Pancreas (tissue), 10 donors: ENCODE measurements at regions of chr16 and their contacts with region 1.

Region 1: GRCh38 chr16:76653390-76654026 is 376.3 kb downstream of the CNTNAP4 start:
- DNase-seq: no peak
- ATAC-seq: peak in 3 of 4 donors; percentile 79 to 80 (median 80)
- H3K4me3 ChIP-seq: no peak overlapping the region
- H3K27ac ChIP-seq: no peak overlapping the region
- H3K4me1 ChIP-seq: no peaks in the 10 kb centered on the region
- H3K27me3 ChIP-seq: no peaks in the 10 kb centered on the region
- CTCF ChIP-seq: peak in 3 of 4 donors; percentile 24 to 38 (median 33)

Region 2: DNA sequence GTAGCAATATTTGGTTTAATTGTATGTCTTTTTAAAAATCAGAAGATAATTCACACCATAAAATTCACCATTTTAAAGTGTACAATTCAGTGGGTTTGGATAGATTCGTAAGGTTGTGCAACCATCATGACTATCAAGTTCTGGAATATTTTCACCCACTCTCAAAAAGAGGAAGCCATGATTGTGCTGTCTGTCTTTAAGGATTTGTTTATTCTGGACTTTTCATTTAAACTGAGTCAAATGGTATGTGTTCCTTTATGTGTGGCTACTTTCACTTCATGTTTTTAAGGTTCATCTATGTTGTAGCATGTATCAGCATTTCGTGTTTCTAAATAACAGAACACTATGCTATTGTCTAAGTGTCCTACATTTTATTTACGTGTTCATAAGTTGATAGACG is 859.1 kb before region 1 on chr16:
- intact Hi-C with region 1: loop called in 1 of 3 experiments (anchors 10 kb)
- DNase-seq: no peak
- ATAC-seq: peak in 1 of 4 donors; percentile 37
- H3K4me3 ChIP-seq: no peak overlapping the region
- H3K27ac ChIP-seq: no peak overlapping the region
- H3K4me1 ChIP-seq: no peaks in the 10 kb centered on the region
- H3K27me3 ChIP-seq: no peaks in the 10 kb centered on the region
- CTCF ChIP-seq: no peak

Region 3: GRCh38 chr16:76428858-76429257 is 224.7 kb before region 1 on chr16:
- intact Hi-C with region 1: no loop called
- DNase-seq: no peak
- ATAC-seq: peak in 3 of 4 donors; percentile 50 to 77 (median 54)
- H3K4me3 ChIP-seq: no peak overlapping the region
- H3K27ac ChIP-seq: no peak overlapping the region
- H3K4me1 ChIP-seq: peaks cover 0 to 3% (median 0%) of the 10 kb centered on the region in 3 donors
- H3K27me3 ChIP-seq: no peaks in the 10 kb centered on the region
- CTCF ChIP-seq: no peak

Region 4: DNA sequence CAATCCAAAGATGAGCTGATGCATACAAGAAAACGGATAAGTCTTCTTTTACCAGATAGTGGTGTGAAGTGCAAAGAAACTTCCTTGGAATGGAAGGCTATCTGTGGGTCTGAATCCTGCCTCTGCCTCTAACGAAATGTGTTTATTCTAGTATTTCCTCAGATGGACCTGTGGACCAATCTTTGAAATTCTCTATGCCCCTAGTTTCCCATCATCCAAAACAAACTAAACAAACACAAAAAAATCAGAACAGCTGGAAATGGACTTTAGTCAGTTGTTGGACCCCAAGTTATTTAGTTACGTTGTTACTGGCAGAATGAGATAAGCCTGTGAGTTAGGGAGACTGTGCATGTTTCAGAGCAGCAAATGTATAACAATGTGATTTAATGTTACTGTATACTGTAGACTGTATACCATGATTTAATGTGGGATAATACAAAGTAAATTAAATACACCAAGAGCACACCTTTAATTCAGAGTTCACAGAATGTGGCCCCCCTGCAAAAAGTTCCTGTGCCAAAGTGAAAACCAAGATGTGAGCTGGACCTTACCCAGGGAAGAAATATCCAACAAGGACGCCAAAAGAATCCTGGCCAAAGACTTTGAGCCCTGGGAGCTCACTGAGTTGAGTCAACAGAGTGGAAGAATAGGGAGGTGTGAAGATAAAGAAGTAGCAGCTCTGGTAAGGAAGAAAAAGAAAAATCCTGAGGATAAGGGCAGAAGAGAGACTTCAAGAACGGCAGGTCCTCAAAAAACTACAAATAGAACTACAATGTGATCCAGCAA is 121.1 kb before region 1 on chr16:
- intact Hi-C with region 1: no loop called
- DNase-seq: no peak
- ATAC-seq: no peak
- H3K4me3 ChIP-seq: no peak overlapping the region
- H3K27ac ChIP-seq: no peak overlapping the region
- H3K4me1 ChIP-seq: no peaks in the 10 kb centered on the region
- H3K27me3 ChIP-seq: no peaks in the 10 kb centered on the region
- CTCF ChIP-seq: no peak

Region 5: DNA sequence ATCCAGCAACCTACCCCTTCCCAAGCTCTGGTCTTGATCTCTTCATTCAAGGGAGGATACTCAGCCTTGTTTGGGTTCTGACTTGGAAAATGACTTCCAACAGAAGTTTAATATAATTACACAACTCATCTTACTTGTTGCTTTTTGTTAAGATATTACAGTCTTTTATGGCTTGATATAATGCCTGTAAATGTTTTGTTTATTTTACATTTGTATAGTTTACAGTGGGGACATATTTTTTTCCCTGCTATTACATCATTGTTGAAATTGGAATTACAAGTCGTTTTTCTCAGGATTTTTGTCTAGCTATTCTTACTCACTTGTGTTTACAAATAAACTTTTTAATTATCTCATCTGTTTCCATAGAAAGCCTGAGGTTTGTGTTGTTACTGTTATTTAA is 59.7 kb after region 1 on chr16:
- intact Hi-C with region 1: no loop called
- DNase-seq: no peak
- ATAC-seq: no peak
- H3K4me3 ChIP-seq: no peak overlapping the region
- H3K27ac ChIP-seq: no peak overlapping the region
- H3K4me1 ChIP-seq: no peaks in the 10 kb centered on the region
- H3K27me3 ChIP-seq: no peaks in the 10 kb centered on the region
- CTCF ChIP-seq: no peak